Breast epithelium (tissue), 4 donors: ENCODE measurements at regions of chr11 and their contacts with region 1.

Region 1: GRCh38 chr11:1837171-1838076 is 1.4 kb upstream of the TNNI2 start:
- DNase-seq: peak in 1 of 2 donors; percentile 57
- H3K4me3 ChIP-seq: no peak overlapping the region
- H3K27ac ChIP-seq: peak overlapping the region in 1 of 2 donors; percentile 5
- H3K4me1 ChIP-seq: peaks cover 0 to 14% of the 10 kb centered on the region in 2 donors
- H3K27me3 ChIP-seq: no peaks in the 10 kb centered on the region
- CTCF ChIP-seq: peak; percentile 71 to 81 (median 76)
- POLR2A ChIP-seq: no peak

Region 2: GRCh38 chr11:1749414-1750312 is 87.8 kb before region 1 on chr11:
- intact Hi-C with region 1: no loop called
- DNase-seq: no peak
- H3K4me3 ChIP-seq: peak overlapping the region; percentile 33 to 65 (median 55)
- H3K27ac ChIP-seq: peak overlapping the region; percentile 28 to 52
- H3K4me1 ChIP-seq: peaks cover 0 to 6% of the 10 kb centered on the region in 2 donors
- H3K27me3 ChIP-seq: peaks cover 0 to 21% of the 10 kb centered on the region in 2 donors
- CTCF ChIP-seq: no peak
- POLR2A ChIP-seq: no peak

Region 3: DNA sequence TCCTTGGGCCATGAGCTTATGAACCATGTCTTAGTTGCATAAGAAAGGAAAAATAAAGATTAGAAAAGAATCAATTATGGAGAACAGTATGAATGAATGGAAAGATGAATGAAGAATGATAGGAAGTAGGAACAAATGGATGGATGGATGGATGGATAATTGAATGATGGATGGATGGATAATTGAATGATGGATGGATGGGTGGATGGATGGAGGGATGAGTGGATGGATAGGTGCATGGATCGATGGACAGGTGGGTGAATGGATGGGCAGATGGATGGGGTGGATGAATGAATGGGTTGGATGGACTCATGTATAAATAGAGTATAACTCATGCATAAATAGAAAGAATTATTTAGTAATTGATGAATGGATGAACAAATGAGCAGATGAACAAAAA is 22.7 kb after region 1 on chr11:
- intact Hi-C with region 1: loop called (anchors 1 kb)
- DNase-seq: no peak
- H3K4me3 ChIP-seq: no peak overlapping the region
- H3K27ac ChIP-seq: no peak overlapping the region
- H3K4me1 ChIP-seq: peaks cover 9 to 17% of the 10 kb centered on the region in 2 donors
- H3K27me3 ChIP-seq: no peaks in the 10 kb centered on the region
- CTCF ChIP-seq: no peak
- POLR2A ChIP-seq: no peak

Region 4: DNA sequence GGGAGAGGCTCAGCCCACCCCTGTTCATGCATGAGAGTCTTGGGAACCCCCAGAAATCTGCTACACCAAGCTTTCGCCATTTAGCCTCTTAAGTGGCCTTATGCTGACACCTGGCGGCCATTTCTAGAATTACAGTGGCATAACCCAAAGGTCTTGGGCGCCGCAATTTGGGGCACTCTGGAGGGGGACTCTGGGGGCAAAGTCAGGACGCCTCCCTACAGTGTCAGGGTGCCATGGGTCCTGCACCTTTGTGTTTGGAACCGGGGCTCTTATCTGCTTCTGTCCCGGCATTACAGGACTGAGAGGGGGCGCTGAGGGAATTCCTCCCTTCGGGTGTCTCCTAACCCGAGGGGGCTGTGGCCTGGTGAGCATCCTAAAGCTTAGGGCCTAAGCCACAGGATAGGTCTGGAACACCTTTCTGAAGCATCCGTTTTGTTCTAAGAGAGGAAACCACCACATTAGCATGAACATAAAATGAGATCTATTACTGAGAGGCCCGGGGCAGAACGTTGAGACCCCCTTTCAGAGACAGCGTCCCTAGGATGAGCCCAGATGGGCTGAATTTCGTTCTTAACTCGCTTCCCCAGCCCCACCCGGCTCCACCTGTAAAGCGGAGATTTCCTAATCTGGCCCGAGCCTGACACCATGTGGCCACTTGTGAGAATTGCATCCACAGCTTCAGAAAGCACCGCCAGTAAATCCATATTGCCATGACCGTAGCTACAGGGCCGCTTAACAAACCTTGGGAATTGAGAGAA is 314.3 kb after region 1 on chr11:
- intact Hi-C with region 1: loop called (anchors 10 kb)
- DNase-seq: peak; percentile 77 to 83
- H3K4me3 ChIP-seq: no peak overlapping the region
- H3K27ac ChIP-seq: no peak overlapping the region
- H3K4me1 ChIP-seq: peaks cover 0 to 3% of the 10 kb centered on the region in 2 donors
- H3K27me3 ChIP-seq: peaks cover 0 to 59% of the 10 kb centered on the region in 2 donors
- CTCF ChIP-seq: peak; percentile 89 to 98 (median 94)
- POLR2A ChIP-seq: no peak